Uterus (tissue), 4 donors: ENCODE measurements at regions of chr5 and their contacts with region 1.

Region 1: DNA sequence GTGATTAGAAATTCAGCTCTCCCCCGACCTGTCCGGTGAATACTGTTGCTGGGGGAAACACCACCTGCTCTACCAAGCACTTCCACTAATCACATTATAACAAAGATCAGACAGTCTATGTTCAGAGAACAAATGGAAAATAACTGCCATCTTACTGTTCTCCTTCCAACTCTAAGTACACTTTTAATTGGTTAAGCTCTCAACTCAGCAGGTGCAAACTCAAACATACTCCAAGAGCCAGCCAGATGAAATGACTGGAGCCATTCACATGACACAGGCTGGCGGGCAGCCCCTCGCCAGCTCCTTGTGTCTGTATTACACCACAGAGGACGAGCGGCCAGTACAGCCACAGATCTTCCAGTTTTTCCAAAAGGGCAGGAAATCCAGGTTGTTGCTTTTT is 16.1 kb downstream of the LIFR start:
- DNase-seq: peak in 1 of 2 donors; percentile 31
- H3K4me3 ChIP-seq: no peak overlapping the region
- H3K27ac ChIP-seq: peak overlapping the region in 1 of 2 donors; percentile 12
- H3K4me1 ChIP-seq: peaks cover 4 to 10% of the 10 kb centered on the region in 2 donors
- H3K27me3 ChIP-seq: no peaks in the 10 kb centered on the region
- CTCF ChIP-seq: no peak
- POLR2A ChIP-seq: no peak

Region 2: GRCh38 chr5:38208782-38209378 is 331.4 kb before region 1 on chr5:
- intact Hi-C with region 1: no loop called
- DNase-seq: no peak
- H3K4me3 ChIP-seq: no peak overlapping the region
- H3K27ac ChIP-seq: no peak overlapping the region
- H3K4me1 ChIP-seq: no peaks in the 10 kb centered on the region
- H3K27me3 ChIP-seq: no peaks in the 10 kb centered on the region
- CTCF ChIP-seq: no peak
- POLR2A ChIP-seq: no peak

Region 3: DNA sequence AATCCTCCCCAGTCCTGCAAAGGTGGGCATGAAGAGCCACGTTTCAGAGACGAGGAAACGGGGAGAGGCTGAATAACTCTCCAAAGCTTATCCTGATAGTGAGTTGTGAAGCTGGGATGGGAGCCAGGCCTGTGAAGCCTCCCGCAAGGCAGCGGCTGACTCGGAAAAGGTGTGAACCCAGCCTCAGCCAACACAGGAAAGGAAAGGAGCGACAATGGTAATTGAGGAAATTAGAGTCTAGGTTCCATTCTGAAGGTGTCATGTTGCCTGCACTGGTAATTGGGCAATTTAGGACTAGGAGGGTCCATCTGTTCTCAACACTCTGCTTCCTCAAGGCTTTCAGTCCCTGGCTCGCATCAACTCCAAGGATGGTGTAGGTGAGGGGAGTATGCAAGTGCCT is 67.3 kb before region 1 on chr5:
- intact Hi-C with region 1: loop called (anchors 10 kb)
- DNase-seq: peak in 1 of 2 donors; percentile 58
- H3K4me3 ChIP-seq: no peak overlapping the region
- H3K27ac ChIP-seq: peak overlapping the region in 1 of 2 donors; percentile 40
- H3K4me1 ChIP-seq: peaks cover 6 to 18% of the 10 kb centered on the region in 2 donors
- H3K27me3 ChIP-seq: no peaks in the 10 kb centered on the region
- CTCF ChIP-seq: no peak
- POLR2A ChIP-seq: no peak